Heart left ventricle (tissue), 16 donors: ENCODE measurements at regions of chr9 and their contacts with region 1.

Region 1: DNA sequence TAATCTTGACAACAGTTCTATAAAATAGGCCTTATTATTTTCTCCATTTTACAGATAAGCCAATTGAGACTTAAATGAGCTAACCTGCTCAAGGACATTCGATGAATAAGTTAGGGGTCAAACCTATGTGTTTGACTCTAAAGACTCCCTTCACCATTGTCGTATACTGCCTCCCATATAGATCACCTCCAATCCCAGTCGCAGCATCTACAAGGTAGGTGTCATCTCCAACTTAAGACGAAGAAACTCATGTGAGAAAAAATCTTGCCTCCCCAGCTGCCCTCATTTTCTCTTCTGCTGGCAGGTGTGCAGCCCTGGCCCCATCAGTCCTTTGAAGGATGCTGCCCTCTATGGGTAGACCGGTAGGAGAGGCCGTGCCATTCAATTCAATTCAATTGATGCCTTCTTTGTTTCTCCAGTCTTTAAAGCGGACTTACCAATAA is 75.2 kb upstream of the SMARCA2 start:
- DNase-seq: no peak
- ATAC-seq: peak in 1 of 4 donors; percentile 63
- H3K4me3 ChIP-seq: no peak overlapping the region
- H3K27ac ChIP-seq: no peak overlapping the region
- H3K4me1 ChIP-seq: no peaks in the 10 kb centered on the region
- H3K27me3 ChIP-seq: no peaks in the 10 kb centered on the region
- CTCF ChIP-seq: peak; percentile 17 to 59 (median 49)
- POLR2A ChIP-seq: no peak

Region 2: GRCh38 chr9:1964093-1964492 is 24.1 kb after region 1 on chr9:
- intact Hi-C with region 1: loop called in 1 of 10 experiments (anchors 2 kb)
- DNase-seq: no peak
- ATAC-seq: no peak
- H3K4me3 ChIP-seq: no peak overlapping the region
- H3K27ac ChIP-seq: no peak overlapping the region
- H3K4me1 ChIP-seq: peaks cover 0 to 8% (median 0%) of the 10 kb centered on the region in 12 donors
- H3K27me3 ChIP-seq: no peaks in the 10 kb centered on the region
- CTCF ChIP-seq: no peak
- POLR2A ChIP-seq: no peak

Region 3: DNA sequence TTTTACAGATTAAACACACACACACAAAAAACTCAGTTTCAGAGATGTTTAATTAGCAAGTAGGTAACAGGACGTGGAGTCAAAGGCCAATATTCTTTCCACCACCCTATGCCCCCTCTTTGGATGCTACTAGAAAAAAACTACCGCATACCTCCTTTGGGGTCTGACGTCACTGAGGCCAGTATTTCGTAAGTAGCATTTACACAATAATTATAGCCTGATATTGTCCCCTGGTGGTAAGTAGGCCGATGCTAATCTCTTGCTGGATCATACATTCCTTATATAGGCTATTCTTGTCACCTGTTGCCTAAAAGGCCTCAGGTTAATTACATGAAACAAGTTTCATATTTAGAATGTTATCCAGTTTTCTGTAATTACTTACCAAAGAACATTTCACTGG is 54.2 kb after region 1 on chr9:
- intact Hi-C with region 1: no loop called
- DNase-seq: no peak
- ATAC-seq: no peak
- H3K4me3 ChIP-seq: no peak overlapping the region
- H3K27ac ChIP-seq: no peak overlapping the region
- H3K4me1 ChIP-seq: no peaks in the 10 kb centered on the region
- H3K27me3 ChIP-seq: peaks cover 0 to 3% (median 0%) of the 10 kb centered on the region in 9 donors
- CTCF ChIP-seq: no peak
- POLR2A ChIP-seq: no peak

Region 4: GRCh38 chr9:2066312-2067273 is 126.6 kb after region 1 on chr9:
- intact Hi-C with region 1: loop called in 1 of 10 experiments (anchors 10 kb)
- DNase-seq: no peak
- ATAC-seq: peak in 2 of 4 donors; percentile 50 to 68
- H3K4me3 ChIP-seq: no peak overlapping the region
- H3K27ac ChIP-seq: no peak overlapping the region
- H3K4me1 ChIP-seq: no peaks in the 10 kb centered on the region
- H3K27me3 ChIP-seq: no peaks in the 10 kb centered on the region
- CTCF ChIP-seq: peak in 10 of 12 donors; percentile 8 to 47 (median 31)
- POLR2A ChIP-seq: no peak

Region 5: GRCh38 chr9:2087500-2088313 is 147.8 kb after region 1 on chr9:
- intact Hi-C with region 1: loop called in 1 of 10 experiments (anchors 10 kb)
- DNase-seq: no peak
- ATAC-seq: peak in 2 of 4 donors; percentile 45 to 50
- H3K4me3 ChIP-seq: no peak overlapping the region
- H3K27ac ChIP-seq: no peak overlapping the region
- H3K4me1 ChIP-seq: peaks cover 0 to 18% (median 6%) of the 10 kb centered on the region in 12 donors
- H3K27me3 ChIP-seq: no peaks in the 10 kb centered on the region
- CTCF ChIP-seq: peak; percentile 38 to 68 (median 54)
- POLR2A ChIP-seq: no peak